Caco-2 (cell line): ENCODE measurements at regions of chr14 and their contacts with region 1.

Region 1: DNA sequence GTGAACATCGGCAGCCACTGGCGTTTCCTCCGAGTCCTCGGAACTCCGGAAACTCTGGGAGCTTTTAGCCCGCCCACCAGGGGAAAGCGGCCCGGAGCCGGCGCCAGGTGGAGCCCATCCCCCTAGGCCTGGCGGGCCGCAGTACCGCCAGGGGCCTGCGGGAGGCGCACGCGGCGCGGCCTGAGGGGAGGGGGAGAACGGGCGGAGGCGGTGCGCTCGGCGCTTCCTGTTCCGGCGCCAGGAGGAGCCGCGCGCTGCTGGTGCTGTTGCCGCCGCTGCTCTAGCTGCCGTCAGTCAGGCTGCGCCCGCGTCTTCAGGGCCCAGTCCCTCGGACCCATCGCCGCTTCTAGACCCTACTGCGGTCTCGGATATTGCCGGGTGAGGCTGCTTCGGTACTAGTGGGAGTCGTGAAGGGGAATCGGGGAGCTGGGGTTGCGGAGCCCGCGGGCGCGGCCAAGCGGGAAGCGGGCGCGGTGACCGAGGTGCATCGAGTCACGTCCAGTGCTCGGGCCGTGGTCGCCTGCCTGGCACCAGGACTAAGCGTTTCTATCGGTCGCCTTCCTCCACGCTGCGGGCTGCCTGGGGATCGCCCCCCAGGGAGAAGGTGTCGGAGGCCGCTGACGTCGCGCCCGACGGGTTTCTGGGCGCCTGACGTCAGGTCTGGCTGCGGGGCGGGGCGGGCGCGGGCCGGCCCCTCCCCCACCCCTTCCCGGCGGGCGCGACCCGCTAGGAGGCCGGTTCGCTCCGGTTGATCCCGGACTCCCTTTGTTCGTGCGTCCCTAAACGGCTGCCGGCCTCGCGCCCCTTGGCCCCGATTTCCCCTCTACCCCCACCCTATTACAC is at the start of gene MAPK1IP1L:
- DNase-seq: peak; percentile 93 to 97
- H3K4me3 ChIP-seq: peak within 1 kb of the TSS; percentile 93
- H3K4me3 Mint-ChIP-seq: peak within 1 kb of the TSS; percentile 88
- H3K27ac Mint-ChIP-seq: peak within 1 kb of the TSS; percentile 89
- H3K4me1 ChIP-seq: peaks cover 11% of the 10 kb centered on the region; the same call in 1 of the 2 replicates
- H3K4me1 Mint-ChIP-seq: peaks cover 11% of the 10 kb centered on the region
- H3K27me3 ChIP-seq: no peaks in the 10 kb centered on the region
- H3K27me3 Mint-ChIP-seq: no peaks in the 10 kb centered on the region
- CTCF ChIP-seq: peak; percentile 85 to 94
- total RNA-seq, gene MAPK1IP1L: 81.8 and 90.8 TPM in 2 replicates

Region 2: GRCh38 chr14:54902521-54903420 is 148.9 kb before region 1 on chr14 and contains the start of gene GCH1:
- CTCF ChIA-PET with region 1: interaction called, 3 read pairs
- POLR2A ChIA-PET with region 1: interaction called, 12 read pairs
- intact Hi-C with region 1: no loop called
- DNase-seq: peak; percentile 90 to 95
- H3K4me3 ChIP-seq: peak within 1 kb of the TSS; percentile 63
- H3K4me3 Mint-ChIP-seq: peak within 1 kb of the TSS; percentile 79
- H3K27ac Mint-ChIP-seq: peak within 1 kb of the TSS; percentile 73
- H3K4me1 ChIP-seq: peaks cover 8% of the 10 kb centered on the region; the same call in 1 of the 2 replicates
- H3K4me1 Mint-ChIP-seq: no peaks in the 10 kb centered on the region
- H3K27me3 ChIP-seq: no peaks in the 10 kb centered on the region
- H3K27me3 Mint-ChIP-seq: no peaks in the 10 kb centered on the region
- CTCF ChIP-seq: peak; percentile 63 to 70
- total RNA-seq, gene GCH1: 16.8 and 17.9 TPM in 2 replicates

Region 3: GRCh38 chr14:55077155-55077554 is 25.5 kb after region 1 on chr14:
- CTCF ChIA-PET with region 1: interaction called, 19 read pairs
- POLR2A ChIA-PET with region 1: interaction called, 46 read pairs
- intact Hi-C with region 1: loop called (anchors 1 kb)
- DNase-seq: peak; percentile 50 to 74
- H3K4me3 ChIP-seq: no peak overlapping the region
- H3K4me3 Mint-ChIP-seq: peak overlapping the region; percentile 73
- H3K27ac Mint-ChIP-seq: peak overlapping the region; percentile 99
- H3K4me1 ChIP-seq: peaks cover 25% of the 10 kb centered on the region
- H3K4me1 Mint-ChIP-seq: peaks cover 25% of the 10 kb centered on the region
- H3K27me3 ChIP-seq: no peaks in the 10 kb centered on the region
- H3K27me3 Mint-ChIP-seq: no peaks in the 10 kb centered on the region
- CTCF ChIP-seq: no peak

Region 4: GRCh38 chr14:55116246-55117030 is 64.8 kb after region 1 on chr14:
- CTCF ChIA-PET with region 1: interaction called, 3 read pairs
- POLR2A ChIA-PET with region 1: interaction called, 15 read pairs
- intact Hi-C with region 1: no loop called
- DNase-seq: no peak
- H3K4me3 ChIP-seq: no peak overlapping the region
- H3K4me3 Mint-ChIP-seq: no peak overlapping the region
- H3K27ac Mint-ChIP-seq: peak overlapping the region; percentile 19
- H3K4me1 ChIP-seq: peaks cover 64% of the 10 kb centered on the region
- H3K4me1 Mint-ChIP-seq: peaks cover 51% of the 10 kb centered on the region
- H3K27me3 ChIP-seq: no peaks in the 10 kb centered on the region
- H3K27me3 Mint-ChIP-seq: no peaks in the 10 kb centered on the region
- CTCF ChIP-seq: no peak

Region 5: GRCh38 chr14:55160989-55161388 is 109.3 kb after region 1 on chr14:
- CTCF ChIA-PET with region 1: interaction called, 7 read pairs
- POLR2A ChIA-PET with region 1: no interaction called
- intact Hi-C with region 1: loop called (anchors 1 kb)
- DNase-seq: no peak
- H3K4me3 ChIP-seq: no peak overlapping the region
- H3K4me3 Mint-ChIP-seq: no peak overlapping the region
- H3K27ac Mint-ChIP-seq: no peak overlapping the region
- H3K4me1 ChIP-seq: no peaks in the 10 kb centered on the region
- H3K4me1 Mint-ChIP-seq: no peaks in the 10 kb centered on the region
- H3K27me3 ChIP-seq: no peaks in the 10 kb centered on the region
- H3K27me3 Mint-ChIP-seq: no peaks in the 10 kb centered on the region
- CTCF ChIP-seq: peak; percentile 39 to 42